Naive thymus-derived CD4-positive, alpha-beta T cell (primary cell): ENCODE measurements at regions of chr4 and their contacts with region 1.

Region 1: DNA sequence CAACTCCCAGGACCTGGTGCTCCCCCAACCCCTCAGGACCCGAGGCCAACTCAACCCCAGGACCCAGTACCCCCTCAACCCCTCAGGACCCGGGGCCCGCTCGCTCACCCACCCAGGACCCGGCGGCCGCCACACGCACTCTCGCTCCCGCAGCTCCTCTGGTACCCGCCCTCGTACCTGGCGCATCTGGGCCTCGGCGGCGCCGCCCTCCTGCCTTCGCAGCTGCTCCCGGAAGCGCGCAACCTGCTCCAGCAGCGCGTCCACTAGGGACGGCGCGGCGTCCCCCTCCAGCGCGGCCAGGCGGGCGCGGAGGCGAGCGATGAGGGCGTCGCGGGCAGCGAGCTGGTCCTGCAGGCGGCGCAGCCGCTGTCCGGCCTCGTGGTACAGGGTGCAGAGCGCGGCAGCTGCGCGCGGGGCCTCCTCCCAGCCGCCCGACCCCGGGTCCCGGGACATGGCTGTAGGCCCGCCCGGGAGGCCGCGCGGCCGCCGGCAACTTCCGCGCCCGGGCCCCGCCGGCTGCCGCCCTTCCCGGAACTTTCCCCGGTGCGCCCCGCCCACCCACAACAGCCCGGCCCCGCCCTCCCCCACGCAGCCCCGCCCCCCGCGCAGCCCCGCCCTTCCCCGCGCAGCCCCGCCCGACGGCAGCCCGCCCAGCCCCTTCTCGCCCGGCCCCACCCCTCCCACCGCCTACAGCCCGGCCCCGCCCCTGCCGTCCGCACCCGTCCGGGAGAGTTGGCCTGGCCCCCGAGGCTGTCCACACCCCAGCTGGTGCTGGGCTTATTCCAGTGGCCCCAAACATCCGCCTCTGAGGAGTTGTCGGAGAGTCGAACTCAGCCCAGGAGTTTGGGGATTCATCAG is at the start of gene TNIP2:
- DNase-seq: peak; percentile 65 to 85 (median 74)
- ATAC-seq: peak; percentile 90
- H3K4me3 ChIP-seq: peak within 1 kb of the TSS; percentile 64
- H3K4me3 Mint-ChIP-seq: peak within 1 kb of the TSS; percentile 75 to 93 (median 87)
- H3K27ac ChIP-seq: peak within 1 kb of the TSS; percentile 91
- H3K27ac Mint-ChIP-seq: peak within 1 kb of the TSS; percentile 54 to 94 (median 86)
- H3K4me1 ChIP-seq: peaks cover 9 to 12% of the 10 kb centered on the region in 2 donors
- H3K4me1 Mint-ChIP-seq: peaks cover 22 to 29% (median 26%) of the 10 kb centered on the region in 7 donors
- H3K27me3 ChIP-seq: no peaks in the 10 kb centered on the region
- H3K27me3 Mint-ChIP-seq: no peaks in the 10 kb centered on the region
- total RNA-seq, gene TNIP2: 39.4 to 56.0 (median 43.6) TPM

Region 2: GRCh38 chr4:2843263-2843940 is 87.3 kb after region 1 on chr4 and contains the start of gene ADD1:
- CTCF ChIA-PET with region 1: interaction called, 3 read pairs
- POLR2A ChIA-PET with region 1: no interaction called
- intact Hi-C with region 1: loop called (anchors 1 to 2 kb)
- DNase-seq: peak; percentile 84 to 100 (median 94)
- ATAC-seq: peak; percentile 98
- H3K4me3 ChIP-seq: peak within 1 kb of the TSS; percentile 80
- H3K4me3 Mint-ChIP-seq: peak within 1 kb of the TSS; percentile 87 to 100 (median 92)
- H3K27ac ChIP-seq: peak within 1 kb of the TSS; percentile 95
- H3K27ac Mint-ChIP-seq: peak within 1 kb of the TSS; percentile 85 to 97 (median 93)
- H3K4me1 ChIP-seq: peaks cover 33 to 40% of the 10 kb centered on the region in 2 donors
- H3K4me1 Mint-ChIP-seq: peaks cover 39 to 75% (median 59%) of the 10 kb centered on the region in 7 donors
- H3K27me3 ChIP-seq: no peaks in the 10 kb centered on the region
- H3K27me3 Mint-ChIP-seq: no peaks in the 10 kb centered on the region
- total RNA-seq, gene ADD1: 211 to 300 (median 282) TPM

Region 3: GRCh38 chr4:2954358-2955185 is 198.5 kb after region 1 on chr4:
- CTCF ChIA-PET with region 1: no interaction called
- POLR2A ChIA-PET with region 1: no interaction called
- intact Hi-C with region 1: loop called in 1 of 2 experiments (anchors 2 kb)
- DNase-seq: peak in 2 of 9 donors; percentile 47 to 82
- ATAC-seq: peak; percentile 76
- H3K4me3 ChIP-seq: no peak overlapping the region
- H3K4me3 Mint-ChIP-seq: peak overlapping the region in 5 of 10 donors; percentile 19 to 73 (median 31)
- H3K27ac ChIP-seq: peak overlapping the region; percentile 6
- H3K27ac Mint-ChIP-seq: peak overlapping the region; percentile 64 to 95 (median 88)
- H3K4me1 ChIP-seq: peaks cover 4% of the 10 kb centered on the region in 2 donors
- H3K4me1 Mint-ChIP-seq: peaks cover 7 to 54% (median 35%) of the 10 kb centered on the region in 7 donors
- H3K27me3 ChIP-seq: no peaks in the 10 kb centered on the region
- H3K27me3 Mint-ChIP-seq: no peaks in the 10 kb centered on the region